Cardiac septum (tissue), 1 donor: ENCODE measurements at regions of chr1 and their contacts with region 1.

Region 1: DNA sequence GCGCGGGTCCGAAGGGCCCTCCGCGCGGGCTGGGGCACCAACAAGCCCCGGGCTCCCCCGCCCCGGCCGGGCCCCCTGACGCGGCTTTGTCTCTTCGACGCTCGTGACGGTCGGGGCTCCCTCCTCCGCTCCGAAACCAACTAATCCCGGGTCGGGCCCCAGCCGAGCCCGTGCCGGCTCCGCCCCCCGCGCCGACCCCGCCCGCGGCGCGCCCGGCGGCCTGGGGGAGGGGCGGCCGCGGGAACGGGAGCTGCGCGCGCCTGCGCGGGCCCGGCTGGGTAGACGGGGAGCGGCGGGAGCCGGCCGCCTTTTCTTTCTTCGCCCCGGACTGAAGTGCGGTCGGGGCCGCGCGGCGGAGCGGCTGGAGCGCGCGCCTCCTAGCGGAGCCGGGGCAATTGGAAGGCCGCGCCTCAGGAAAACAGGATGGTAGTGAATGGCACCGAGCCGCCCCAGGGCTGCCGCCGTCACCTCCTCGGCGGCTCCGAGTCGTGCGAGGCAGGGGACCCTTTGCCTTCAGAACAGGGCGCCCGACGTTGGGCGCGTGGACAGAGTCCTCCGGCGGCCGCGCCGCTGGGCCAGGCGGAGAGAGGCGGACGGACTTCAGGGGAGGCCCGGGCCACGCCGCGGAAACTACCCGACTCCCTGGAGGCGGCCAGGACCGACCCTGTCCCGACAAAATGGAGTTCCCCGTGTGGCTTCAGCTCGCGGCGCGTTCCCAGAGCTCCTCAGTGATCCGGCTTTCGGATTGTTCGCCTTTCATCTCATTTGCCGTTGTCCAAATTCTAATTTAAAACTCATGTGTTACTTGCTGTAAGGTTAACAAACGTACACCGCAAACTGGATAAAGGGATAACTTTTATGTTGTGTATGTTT is at the start of gene TP53BP2:
- DNase-seq: peak; percentile 95
- total RNA-seq, gene TP53BP2: 24.9 TPM

Region 2: GRCh38 chr1:223712194-223712849 is 133.7 kb before region 1 on chr1 and contains the start of gene CAPN2:
- intact Hi-C with region 1: loop called (anchors 2 kb)
- DNase-seq: peak; percentile 91
- total RNA-seq, gene CAPN2: 80.0 TPM

Region 3: GRCh38 chr1:223771814-223772770 is 74.0 kb before region 1 on chr1:
- intact Hi-C with region 1: loop called (anchors 2 kb)
- DNase-seq: no peak

Region 4: DNA sequence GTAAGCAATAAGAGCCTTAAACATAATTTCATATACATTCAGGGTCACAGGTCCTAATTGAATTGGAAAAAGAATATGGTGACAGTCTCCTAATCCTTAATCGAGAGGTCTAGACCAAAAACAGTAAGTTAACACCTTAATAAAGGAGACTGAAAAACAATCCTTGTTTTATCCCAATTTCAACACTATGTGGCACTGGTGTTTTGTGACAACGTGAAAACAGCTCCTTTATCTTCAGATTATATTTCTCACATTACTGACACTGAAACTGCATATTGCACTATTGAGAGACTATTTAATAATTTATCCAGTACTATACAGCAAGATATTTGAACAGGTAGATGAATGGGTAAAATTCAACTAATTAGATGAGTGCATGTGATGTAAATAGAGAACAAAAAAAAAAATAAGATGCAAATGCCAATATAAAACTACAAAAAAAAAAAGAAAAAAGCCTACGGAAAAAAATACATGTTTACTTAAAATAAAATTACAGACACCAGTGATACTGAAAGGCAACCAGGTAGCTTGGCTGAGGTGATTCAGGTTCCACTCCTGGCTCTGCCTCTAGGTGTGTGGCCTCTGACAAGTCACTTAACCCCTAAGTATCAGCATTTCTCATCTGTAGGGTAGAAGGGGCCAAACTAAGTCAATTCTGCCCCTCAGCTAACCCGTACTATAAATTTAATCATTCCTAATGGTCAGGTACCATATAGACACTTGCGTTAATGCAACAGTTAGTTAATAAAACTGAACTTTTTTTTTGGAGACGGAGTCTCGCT is 34.2 kb before region 1 on chr1:
- intact Hi-C with region 1: loop called (anchors 2 kb)
- DNase-seq: no peak

Region 5: GRCh38 chr1:223870617-223871574 is 24.9 kb after region 1 on chr1:
- intact Hi-C with region 1: no loop called
- DNase-seq: no peak

Region 6: GRCh38 chr1:223887747-223888418 is 41.8 kb after region 1 on chr1:
- intact Hi-C with region 1: loop called (anchors 5 kb)
- DNase-seq: no peak